Naive thymus-derived CD4-positive, alpha-beta T cell (primary cell): ENCODE measurements at regions of chr13 and their contacts with region 1.

Region 1: GRCh38 chr13:31161828-31162590 is at the start of gene HSPH1:
- DNase-seq: peak; percentile 95 to 100 (median 99)
- ATAC-seq: peak; percentile 91
- H3K4me3 ChIP-seq: peak within 1 kb of the TSS; percentile 89
- H3K4me3 Mint-ChIP-seq: peak within 1 kb of the TSS; percentile 92 to 98 (median 94)
- H3K27ac ChIP-seq: peak within 1 kb of the TSS; percentile 96
- H3K27ac Mint-ChIP-seq: peak within 1 kb of the TSS; percentile 98 to 99 (median 99)
- H3K4me1 ChIP-seq: peaks cover 22 to 26% of the 10 kb centered on the region in 2 donors
- H3K4me1 Mint-ChIP-seq: peaks cover 23 to 52% (median 47%) of the 10 kb centered on the region in 7 donors
- H3K27me3 ChIP-seq: no peaks in the 10 kb centered on the region
- H3K27me3 Mint-ChIP-seq: peaks cover 0 to 3% (median 0%) of the 10 kb centered on the region in 5 donors
- total RNA-seq, gene HSPH1: 65.5 to 154 (median 107) TPM

Region 2: GRCh38 chr13:30114571-30115256 is 1047.3 kb before region 1 on chr13:
- CTCF ChIA-PET with region 1: no interaction called
- POLR2A ChIA-PET with region 1: no interaction called
- intact Hi-C with region 1: loop called in 1 of 2 experiments (anchors 2 kb)
- DNase-seq: peak; percentile 81 to 94 (median 91)
- ATAC-seq: peak; percentile 95
- H3K4me3 ChIP-seq: peak overlapping the region; percentile 48
- H3K4me3 Mint-ChIP-seq: peak overlapping the region; percentile 74 to 89 (median 84)
- H3K27ac ChIP-seq: peak overlapping the region; percentile 39
- H3K27ac Mint-ChIP-seq: peak overlapping the region in 8 of 9 donors; percentile 43 to 90 (median 80)
- H3K4me1 ChIP-seq: peaks cover 10 to 17% of the 10 kb centered on the region in 2 donors
- H3K4me1 Mint-ChIP-seq: peaks cover 17 to 41% (median 34%) of the 10 kb centered on the region in 7 donors
- H3K27me3 ChIP-seq: no peaks in the 10 kb centered on the region
- H3K27me3 Mint-ChIP-seq: peaks cover 0 to 11% (median 0%) of the 10 kb centered on the region in 5 donors

Region 3: DNA sequence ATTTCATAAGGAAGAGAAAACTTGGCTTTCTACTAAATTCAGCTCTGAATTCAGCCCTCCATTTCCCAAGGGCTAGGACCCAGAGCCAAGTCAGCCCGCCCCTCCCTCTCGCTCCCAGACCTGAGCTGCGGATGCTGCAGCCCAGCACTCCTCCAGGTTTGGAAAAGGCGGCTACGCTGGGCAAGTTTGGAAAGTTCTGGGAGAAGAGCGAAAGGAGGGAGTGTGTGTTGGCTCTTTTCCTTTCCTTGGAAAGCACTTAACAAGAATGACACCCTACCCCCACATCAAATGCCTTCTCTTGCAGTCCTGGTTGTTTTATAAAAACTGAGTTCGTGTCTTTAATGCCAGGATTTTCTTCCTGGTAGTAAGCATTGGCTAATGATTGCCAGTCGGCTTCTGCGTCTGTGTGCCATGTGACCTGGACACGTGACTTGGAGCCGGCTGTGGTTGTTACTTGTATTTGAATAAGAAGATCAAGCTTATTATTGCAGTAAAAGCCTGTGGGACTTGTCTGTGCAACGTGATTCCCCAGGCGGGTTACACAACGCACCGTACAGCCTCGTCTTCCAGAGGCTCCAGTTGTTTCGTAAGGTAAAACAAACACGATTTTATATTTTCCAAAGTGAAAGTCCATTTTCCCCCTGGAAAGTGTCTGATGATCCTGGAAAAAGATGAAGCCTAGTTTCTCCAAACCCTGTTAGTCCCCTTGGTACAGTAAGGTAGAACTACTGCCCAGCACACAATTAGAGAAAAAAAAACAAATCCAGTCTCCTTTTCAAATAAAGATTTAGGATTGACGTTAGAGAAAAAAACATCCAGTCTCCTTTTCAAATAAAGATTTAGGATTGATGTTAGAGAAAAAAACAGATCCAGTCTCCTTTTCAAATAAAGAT is 766.6 kb before region 1 on chr13:
- CTCF ChIA-PET with region 1: no interaction called
- POLR2A ChIA-PET with region 1: no interaction called
- intact Hi-C with region 1: loop called in 1 of 2 experiments (anchors 10 kb)
- DNase-seq: peak; percentile 22 to 83 (median 71)
- ATAC-seq: peak; percentile 82
- H3K4me3 ChIP-seq: peak overlapping the region; percentile 71
- H3K4me3 Mint-ChIP-seq: peak overlapping the region; percentile 83 to 97 (median 88)
- H3K27ac ChIP-seq: peak overlapping the region; percentile 78
- H3K27ac Mint-ChIP-seq: peak overlapping the region; percentile 90 to 97 (median 95)
- H3K4me1 ChIP-seq: peaks cover 16 to 31% of the 10 kb centered on the region in 2 donors
- H3K4me1 Mint-ChIP-seq: peaks cover 17 to 58% (median 54%) of the 10 kb centered on the region in 7 donors
- H3K27me3 ChIP-seq: no peaks in the 10 kb centered on the region
- H3K27me3 Mint-ChIP-seq: no peaks in the 10 kb centered on the region

Region 4: DNA sequence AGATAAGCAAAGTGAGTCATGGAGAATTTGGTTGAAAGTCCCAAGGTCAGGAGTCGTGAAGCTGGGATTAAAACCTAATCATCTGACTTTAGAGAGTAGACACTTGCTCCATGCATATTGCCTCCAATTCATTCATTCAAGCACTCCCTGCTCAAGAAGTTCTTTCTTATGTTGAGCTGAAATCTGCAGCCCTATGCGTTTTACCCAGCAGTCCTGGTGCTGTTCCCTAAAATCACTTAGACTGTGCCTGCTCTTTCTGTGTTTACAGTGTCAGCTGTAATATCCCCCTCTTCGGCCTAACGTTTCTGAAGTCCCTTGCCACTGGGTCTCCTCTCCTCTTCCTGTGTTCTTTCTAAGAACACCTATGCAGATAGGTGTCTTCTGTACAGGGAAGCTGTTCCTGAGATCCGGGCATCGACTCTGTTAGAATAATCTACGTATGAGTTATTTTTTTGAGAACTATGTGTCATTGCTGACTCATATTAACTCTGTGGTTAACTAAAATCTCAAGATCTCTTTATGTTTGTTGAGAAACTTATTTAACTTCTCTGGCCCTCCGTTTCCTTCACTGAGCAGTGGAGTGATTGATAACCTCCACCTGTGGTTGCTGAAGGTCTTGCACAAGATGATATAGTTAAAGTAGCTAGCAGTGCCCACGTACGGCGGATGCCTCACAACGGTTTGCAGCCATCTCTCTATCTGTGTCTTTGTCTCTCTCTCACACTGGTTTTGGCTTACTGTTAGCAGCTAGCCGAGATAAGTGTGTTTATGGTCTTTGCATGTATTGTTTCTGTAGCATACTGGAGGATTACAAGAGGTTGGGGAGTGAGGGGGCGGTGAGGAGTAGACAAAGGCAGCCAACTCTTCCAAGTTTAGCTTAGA is 422.0 kb before region 1 on chr13:
- CTCF ChIA-PET with region 1: no interaction called
- POLR2A ChIA-PET with region 1: no interaction called
- intact Hi-C with region 1: loop called (anchors 2 to 5 kb)
- DNase-seq: peak in 8 of 9 donors; percentile 16 to 61 (median 32)
- ATAC-seq: peak; percentile 47
- H3K4me3 ChIP-seq: peak overlapping the region; percentile 29
- H3K4me3 Mint-ChIP-seq: peak overlapping the region; percentile 79 to 87 (median 82)
- H3K27ac ChIP-seq: no peak overlapping the region
- H3K27ac Mint-ChIP-seq: peak overlapping the region; percentile 7 to 93 (median 66)
- H3K4me1 ChIP-seq: peaks cover 59 to 60% of the 10 kb centered on the region in 2 donors
- H3K4me1 Mint-ChIP-seq: peaks cover 68 to 81% (median 79%) of the 10 kb centered on the region in 7 donors
- H3K27me3 ChIP-seq: no peaks in the 10 kb centered on the region
- H3K27me3 Mint-ChIP-seq: no peaks in the 10 kb centered on the region

Region 5: GRCh38 chr13:31131470-31131961 is 30.5 kb before region 1 on chr13:
- CTCF ChIA-PET with region 1: no interaction called
- POLR2A ChIA-PET with region 1: no interaction called
- intact Hi-C with region 1: loop called in 1 of 2 experiments (anchors 2 kb)
- DNase-seq: peak in 2 of 9 donors; percentile 6 to 8
- ATAC-seq: peak; percentile 30
- H3K4me3 ChIP-seq: no peak overlapping the region
- H3K4me3 Mint-ChIP-seq: peak overlapping the region in 3 of 10 donors; percentile 29 to 43 (median 41)
- H3K27ac ChIP-seq: no peak overlapping the region
- H3K27ac Mint-ChIP-seq: peak overlapping the region in 4 of 9 donors; percentile 11 to 62 (median 42)
- H3K4me1 ChIP-seq: no peaks in the 10 kb centered on the region
- H3K4me1 Mint-ChIP-seq: peaks cover 3 to 43% (median 30%) of the 10 kb centered on the region in 7 donors
- H3K27me3 ChIP-seq: no peaks in the 10 kb centered on the region
- H3K27me3 Mint-ChIP-seq: peaks cover 8 to 23% (median 15%) of the 10 kb centered on the region in 5 donors

Region 6: GRCh38 chr13:31199849-31200636 is 38.0 kb after region 1 on chr13 and contains the start of gene B3GLCT:
- CTCF ChIA-PET with region 1: interaction called, 5 read pairs
- POLR2A ChIA-PET with region 1: interaction called, 16 read pairs
- intact Hi-C with region 1: loop called (anchors 1 kb)
- DNase-seq: peak; percentile 70 to 90 (median 86)
- ATAC-seq: peak; percentile 88
- H3K4me3 ChIP-seq: peak within 1 kb of the TSS; percentile 65
- H3K4me3 Mint-ChIP-seq: peak within 1 kb of the TSS; percentile 83 to 92 (median 89)
- H3K27ac ChIP-seq: peak within 1 kb of the TSS; percentile 82
- H3K27ac Mint-ChIP-seq: peak within 1 kb of the TSS; percentile 78 to 94 (median 92)
- H3K4me1 ChIP-seq: peaks cover 5 to 6% of the 10 kb centered on the region in 2 donors
- H3K4me1 Mint-ChIP-seq: peaks cover 13 to 28% (median 23%) of the 10 kb centered on the region in 7 donors
- H3K27me3 ChIP-seq: no peaks in the 10 kb centered on the region
- H3K27me3 Mint-ChIP-seq: peaks cover 0 to 19% (median 0%) of the 10 kb centered on the region in 5 donors
- total RNA-seq, gene B3GLCT: 3.7 to 4.6 (median 4.4) TPM

Region 7: GRCh38 chr13:32427852-32428580 is 1266.0 kb after region 1 on chr13 and contains the start of gene N4BP2L1:
- CTCF ChIA-PET with region 1: no interaction called
- POLR2A ChIA-PET with region 1: no interaction called
- intact Hi-C with region 1: loop called in 1 of 2 experiments (anchors 2 kb)
- DNase-seq: peak; percentile 60 to 91 (median 78)
- ATAC-seq: peak; percentile 81
- H3K4me3 ChIP-seq: peak within 1 kb of the TSS; percentile 64
- H3K4me3 Mint-ChIP-seq: peak within 1 kb of the TSS; percentile 90 to 100 (median 94)
- H3K27ac ChIP-seq: peak within 1 kb of the TSS; percentile 98
- H3K27ac Mint-ChIP-seq: peak within 1 kb of the TSS; percentile 95 to 99 (median 97)
- H3K4me1 ChIP-seq: peaks cover 19 to 20% of the 10 kb centered on the region in 2 donors
- H3K4me1 Mint-ChIP-seq: peaks cover 34 to 50% (median 48%) of the 10 kb centered on the region in 7 donors
- H3K27me3 ChIP-seq: no peaks in the 10 kb centered on the region
- H3K27me3 Mint-ChIP-seq: no peaks in the 10 kb centered on the region
- total RNA-seq, gene N4BP2L1: 30.4 to 58.0 (median 47.1) TPM